ENCODE measurements at regions of chr4 and their contacts with region 1.

Region 1: GRCh38 chr4:98995183-98996055 is at the start of gene METAP1:
- DNase-seq: peak; percentile 79
- ATAC-seq: peak; percentile 90
- H3K4me3 ChIP-seq: peak within 1 kb of the TSS; percentile 94
- H3K27ac ChIP-seq: peak within 1 kb of the TSS; percentile 74
- H3K4me1 ChIP-seq: no peaks in the 10 kb centered on the region
- H3K27me3 ChIP-seq: no peaks in the 10 kb centered on the region
- CTCF ChIP-seq: peak; percentile 67 to 85 (median 72)
- EP300 ChIP-seq: no peak
- POLR2A ChIP-seq: peak; percentile 96
- RAD21 ChIP-seq: peak; percentile 80
- polyA plus RNA-seq, gene METAP1: 22.7 to 32.4 TPM

Region 2: GRCh38 chr4:98260579-98261290 is 734.7 kb before region 1 on chr4:
- CTCF ChIA-PET with region 1: no interaction called
- POLR2A ChIA-PET with region 1: no interaction called
- RAD21 ChIA-PET with region 1: interaction called, 10 read pairs
- SMC1A ChIA-PET with region 1: no interaction called
- in situ Hi-C with region 1: no loop called
- intact Hi-C with region 1: no loop called
- DNase-seq: peak; percentile 83
- ATAC-seq: peak; percentile 91
- H3K4me3 ChIP-seq: peak overlapping the region; percentile 98
- H3K27ac ChIP-seq: peak overlapping the region; percentile 91
- H3K4me1 ChIP-seq: no peaks in the 10 kb centered on the region
- H3K27me3 ChIP-seq: no peaks in the 10 kb centered on the region
- CTCF ChIP-seq: no peak
- EP300 ChIP-seq: no peak
- POLR2A ChIP-seq: peak; percentile 89
- RAD21 ChIP-seq: no peak

Region 3: DNA sequence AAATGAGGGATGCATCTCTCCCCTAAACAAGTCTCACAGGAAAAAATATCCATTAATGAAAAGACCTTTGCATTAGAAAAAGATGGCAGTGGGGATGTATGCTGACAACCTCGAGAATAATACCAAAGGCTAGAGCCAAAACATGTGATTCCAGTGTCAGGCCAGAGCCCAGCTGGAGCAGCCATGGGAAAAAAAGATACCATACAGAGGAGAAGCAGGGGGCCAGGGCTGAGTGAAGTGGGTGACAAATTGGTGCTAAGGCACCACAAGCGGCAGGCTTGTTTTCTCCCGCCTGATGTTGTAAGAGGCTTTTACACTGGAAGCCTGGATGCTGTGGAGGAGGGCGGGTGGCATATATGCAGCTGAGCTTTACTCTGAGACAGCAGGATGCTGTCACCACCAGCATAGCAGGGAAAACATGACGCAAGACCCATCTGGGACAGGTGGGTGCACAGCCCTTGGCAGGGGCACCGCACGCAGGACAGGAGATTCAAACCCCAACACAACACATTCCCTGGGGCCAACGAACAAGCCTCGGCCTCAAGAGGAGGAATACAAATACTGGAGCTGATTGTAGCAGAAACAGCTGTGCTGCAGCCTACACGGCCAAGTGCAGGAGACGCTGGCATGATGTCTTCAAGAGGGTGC is 428.9 kb before region 1 on chr4:
- CTCF ChIA-PET with region 1: no interaction called
- POLR2A ChIA-PET with region 1: no interaction called
- RAD21 ChIA-PET with region 1: no interaction called
- SMC1A ChIA-PET with region 1: no interaction called
- in situ Hi-C with region 1: no loop called
- intact Hi-C with region 1: no loop called
- DNase-seq: no peak
- ATAC-seq: no peak
- H3K4me3 ChIP-seq: no peak overlapping the region
- H3K27ac ChIP-seq: no peak overlapping the region
- H3K4me1 ChIP-seq: no peaks in the 10 kb centered on the region
- H3K27me3 ChIP-seq: no peaks in the 10 kb centered on the region
- CTCF ChIP-seq: no peak
- EP300 ChIP-seq: no peak
- POLR2A ChIP-seq: no peak
- RAD21 ChIP-seq: no peak

Region 4: DNA sequence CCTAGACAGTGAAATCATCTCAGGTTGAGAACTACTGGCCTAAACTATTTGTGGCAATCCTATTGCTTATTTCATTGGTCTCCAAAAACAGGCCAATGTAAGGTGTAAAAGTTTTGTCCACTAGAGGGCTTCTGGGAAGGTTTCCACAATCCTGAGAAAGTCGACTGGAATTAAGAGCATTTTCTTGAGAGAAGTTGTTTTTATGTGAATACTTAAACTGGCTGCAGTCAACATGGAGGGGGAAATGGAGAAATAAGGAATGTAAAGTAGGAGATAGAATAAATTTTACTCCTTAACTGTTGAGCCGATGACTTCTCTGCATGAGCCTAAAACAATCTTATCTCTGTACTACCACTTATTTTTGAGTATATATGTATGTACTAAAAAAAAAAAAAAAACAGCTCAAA is 55.5 kb before region 1 on chr4:
- CTCF ChIA-PET with region 1: interaction called, 10 read pairs
- POLR2A ChIA-PET with region 1: no interaction called
- RAD21 ChIA-PET with region 1: interaction called, 3 read pairs
- SMC1A ChIA-PET with region 1: no interaction called
- in situ Hi-C with region 1: no loop called
- intact Hi-C with region 1: no loop called
- DNase-seq: no peak
- ATAC-seq: peak; percentile 82
- H3K4me3 ChIP-seq: no peak overlapping the region
- H3K27ac ChIP-seq: no peak overlapping the region
- H3K4me1 ChIP-seq: no peaks in the 10 kb centered on the region
- H3K27me3 ChIP-seq: no peaks in the 10 kb centered on the region
- CTCF ChIP-seq: peak; percentile 48 to 73 (median 65)
- EP300 ChIP-seq: no peak
- POLR2A ChIP-seq: no peak
- RAD21 ChIP-seq: peak; percentile 48

Region 5: DNA sequence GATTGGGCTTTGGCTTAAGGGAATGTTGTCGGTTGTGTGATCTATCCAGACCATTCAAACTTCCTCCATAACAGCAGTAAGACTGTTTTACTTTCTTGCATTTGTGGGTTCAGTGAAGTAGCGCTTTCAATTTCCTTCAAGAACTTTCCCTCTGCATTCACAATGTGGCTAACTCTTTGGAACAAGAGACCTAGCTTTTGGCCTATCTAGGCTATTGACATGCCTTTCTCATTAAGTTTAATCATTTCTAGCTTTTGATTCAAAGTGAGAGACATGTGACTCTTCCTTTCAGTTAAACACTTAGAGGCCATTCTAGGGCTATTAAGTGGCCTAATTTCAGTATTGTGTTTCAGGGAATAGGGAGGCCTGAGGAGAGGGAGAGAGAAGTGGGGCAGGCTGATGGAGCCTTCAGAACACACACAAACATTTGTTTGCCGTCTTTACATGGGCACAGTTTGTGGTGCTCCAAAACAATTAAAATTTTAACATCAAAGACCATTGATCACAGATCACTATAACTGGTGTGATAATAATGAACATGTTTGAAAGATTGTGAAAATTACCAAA is 59.1 kb after region 1 on chr4:
- CTCF ChIA-PET with region 1: interaction called, 287 read pairs
- POLR2A ChIA-PET with region 1: interaction called, 6 read pairs
- RAD21 ChIA-PET with region 1: interaction called, 103 read pairs
- SMC1A ChIA-PET with region 1: interaction called, 166 read pairs
- in situ Hi-C with region 1: loop called (anchors 5 kb)
- intact Hi-C with region 1: loop called (anchors 1 kb)
- DNase-seq: peak; percentile 26
- ATAC-seq: peak; percentile 79
- H3K4me3 ChIP-seq: no peak overlapping the region
- H3K27ac ChIP-seq: no peak overlapping the region
- H3K4me1 ChIP-seq: peaks cover 10% of the 10 kb centered on the region
- H3K27me3 ChIP-seq: no peaks in the 10 kb centered on the region
- CTCF ChIP-seq: no peak
- EP300 ChIP-seq: 0 out of 4 replicates have a peak, but pooled peaks of 1 of the 2 experiments have one; percentile 41
- POLR2A ChIP-seq: no peak
- RAD21 ChIP-seq: no peak

Region 6: GRCh38 chr4:99405433-99406115 is 410.2 kb after region 1 on chr4:
- CTCF ChIA-PET with region 1: interaction called, 42 read pairs
- POLR2A ChIA-PET with region 1: no interaction called
- RAD21 ChIA-PET with region 1: interaction called, 44 read pairs
- SMC1A ChIA-PET with region 1: interaction called, 38 read pairs
- in situ Hi-C with region 1: loop called (anchors 10 kb)
- intact Hi-C with region 1: loop called (anchors 1 kb)
- DNase-seq: peak; percentile 38
- ATAC-seq: peak; percentile 40
- H3K4me3 ChIP-seq: no peak overlapping the region
- H3K27ac ChIP-seq: peak overlapping the region; percentile 28; the same call in 1 of the 2 replicates
- H3K4me1 ChIP-seq: peaks cover 16% of the 10 kb centered on the region
- H3K27me3 ChIP-seq: no peaks in the 10 kb centered on the region
- CTCF ChIP-seq: peak; percentile 86 to 90 (median 87)
- EP300 ChIP-seq: no peak
- POLR2A ChIP-seq: no peak
- RAD21 ChIP-seq: peak; percentile 97

Measured in GM12878 (cell line).